SK-N-SH (cell line): ENCODE measurements at regions of chr2 and their contacts with region 1.

Region 1: DNA sequence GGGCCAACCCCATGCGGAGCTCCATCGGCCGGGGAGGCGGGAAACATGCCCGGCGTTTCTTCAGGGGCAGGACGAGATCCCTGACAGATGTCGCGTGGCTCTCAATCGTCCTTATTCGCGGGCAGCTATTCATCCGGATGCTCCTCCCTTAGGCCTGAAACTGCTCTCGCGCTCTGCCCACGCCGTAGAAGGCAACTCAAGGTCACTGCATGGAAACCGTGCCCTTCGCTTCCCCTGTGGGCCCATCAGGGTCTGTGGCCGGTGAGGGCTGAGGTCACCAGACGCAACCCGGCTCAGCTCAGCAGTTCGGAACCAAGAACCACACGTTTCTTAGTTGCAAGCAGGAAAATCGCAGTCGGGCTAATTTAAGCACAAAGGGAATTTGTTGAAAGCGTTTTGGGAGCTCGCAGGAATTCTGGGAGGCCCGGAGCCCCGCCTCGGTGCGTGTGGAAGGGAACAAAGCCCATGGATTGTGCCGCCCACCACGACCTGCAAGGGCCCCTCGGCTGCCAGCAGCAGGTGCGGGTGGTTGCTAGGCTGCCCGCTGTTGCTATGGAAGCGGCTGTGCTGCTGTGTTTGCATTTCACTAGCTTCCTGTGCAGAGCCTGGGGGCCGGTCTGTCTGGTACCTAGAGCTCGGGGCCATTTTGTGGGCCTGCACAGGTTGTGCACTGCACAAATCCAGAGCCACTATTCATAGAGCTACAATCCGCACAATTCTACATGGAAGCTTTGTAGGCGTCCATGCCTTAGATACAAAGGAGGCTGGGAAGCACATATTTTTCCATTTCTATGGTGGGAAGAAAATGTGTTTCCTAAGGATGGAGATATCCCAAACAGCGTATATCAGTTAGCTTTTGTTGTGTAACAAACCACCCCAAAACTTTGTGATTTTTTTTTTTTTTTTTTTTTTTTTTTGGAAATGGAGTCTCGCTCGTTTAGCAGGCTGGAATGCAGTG is 6.0 kb upstream of the ALLC start:
- DNase-seq: peak; percentile 74
- H3K4me3 ChIP-seq: no peak overlapping the region
- H3K27ac ChIP-seq: no peak overlapping the region
- H3K4me1 ChIP-seq: peaks cover 0 to 24% of the 10 kb centered on the region in 2 experiments; a peak in 2 of 4 replicates
- H3K27me3 ChIP-seq: no peaks in the 10 kb centered on the region
- CTCF ChIP-seq: no peak
- EP300 ChIP-seq: no peak
- RAD21 ChIP-seq: no peak

Region 2: GRCh38 chr2:3423492-3424175 is 228.3 kb before region 1 on chr2:
- CTCF ChIA-PET with region 1: interaction called, 28 read pairs
- POLR2A ChIA-PET with region 1: no interaction called
- DNase-seq: peak; percentile 88
- H3K4me3 ChIP-seq: no peak overlapping the region
- H3K27ac ChIP-seq: no peak overlapping the region
- H3K4me1 ChIP-seq: peaks cover 0 to 15% of the 10 kb centered on the region in 2 experiments; a peak in 1 of 4 replicates
- H3K27me3 ChIP-seq: no peaks in the 10 kb centered on the region
- CTCF ChIP-seq: peak; percentile 100
- EP300 ChIP-seq: no peak
- RAD21 ChIP-seq: peak; percentile 68

Region 3: DNA sequence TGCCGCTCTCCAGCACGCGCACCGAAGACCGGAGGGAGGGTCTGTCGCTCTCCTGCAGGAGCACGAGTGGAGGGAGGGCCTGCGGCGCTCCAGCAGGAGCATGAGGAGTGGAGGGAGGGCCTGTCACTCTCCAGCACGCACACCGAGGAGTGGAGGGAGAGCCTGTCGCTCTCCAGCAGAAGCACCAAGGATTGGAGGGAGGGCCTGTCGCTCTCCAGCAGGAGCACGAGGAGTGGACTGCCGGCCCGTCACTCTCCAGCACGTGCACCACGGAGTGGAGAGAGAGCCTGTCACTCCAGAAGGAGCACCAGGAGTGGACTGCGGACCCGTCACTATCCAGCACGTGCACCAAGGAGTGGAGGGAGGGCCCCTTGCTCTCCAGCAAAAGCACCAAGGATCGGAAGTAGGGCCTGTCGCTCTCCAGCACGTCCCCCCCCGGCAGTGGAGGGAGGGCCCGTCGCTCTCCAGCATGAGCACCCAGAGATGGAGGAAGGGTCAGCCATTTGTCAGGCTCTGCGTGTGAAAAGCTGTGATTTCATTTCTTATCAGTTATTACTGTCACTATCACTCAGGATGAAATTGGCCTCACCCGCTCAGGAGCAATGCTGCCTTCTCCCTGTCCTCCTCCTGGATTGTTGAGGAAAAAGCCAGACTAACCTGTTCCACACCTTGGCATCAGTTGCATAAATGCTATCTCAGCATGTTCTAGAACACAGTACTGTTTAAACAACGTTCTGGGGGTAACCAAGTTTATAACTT is 168.6 kb before region 1 on chr2:
- CTCF ChIA-PET with region 1: interaction called, 13 read pairs
- POLR2A ChIA-PET with region 1: no interaction called
- DNase-seq: no peak
- H3K4me3 ChIP-seq: no peak overlapping the region
- H3K27ac ChIP-seq: no peak overlapping the region
- H3K4me1 ChIP-seq: no peaks in the 10 kb centered on the region; a peak in 1 of 4 replicates
- H3K27me3 ChIP-seq: no peaks in the 10 kb centered on the region
- CTCF ChIP-seq: no peak
- EP300 ChIP-seq: no peak
- RAD21 ChIP-seq: no peak

Region 4: DNA sequence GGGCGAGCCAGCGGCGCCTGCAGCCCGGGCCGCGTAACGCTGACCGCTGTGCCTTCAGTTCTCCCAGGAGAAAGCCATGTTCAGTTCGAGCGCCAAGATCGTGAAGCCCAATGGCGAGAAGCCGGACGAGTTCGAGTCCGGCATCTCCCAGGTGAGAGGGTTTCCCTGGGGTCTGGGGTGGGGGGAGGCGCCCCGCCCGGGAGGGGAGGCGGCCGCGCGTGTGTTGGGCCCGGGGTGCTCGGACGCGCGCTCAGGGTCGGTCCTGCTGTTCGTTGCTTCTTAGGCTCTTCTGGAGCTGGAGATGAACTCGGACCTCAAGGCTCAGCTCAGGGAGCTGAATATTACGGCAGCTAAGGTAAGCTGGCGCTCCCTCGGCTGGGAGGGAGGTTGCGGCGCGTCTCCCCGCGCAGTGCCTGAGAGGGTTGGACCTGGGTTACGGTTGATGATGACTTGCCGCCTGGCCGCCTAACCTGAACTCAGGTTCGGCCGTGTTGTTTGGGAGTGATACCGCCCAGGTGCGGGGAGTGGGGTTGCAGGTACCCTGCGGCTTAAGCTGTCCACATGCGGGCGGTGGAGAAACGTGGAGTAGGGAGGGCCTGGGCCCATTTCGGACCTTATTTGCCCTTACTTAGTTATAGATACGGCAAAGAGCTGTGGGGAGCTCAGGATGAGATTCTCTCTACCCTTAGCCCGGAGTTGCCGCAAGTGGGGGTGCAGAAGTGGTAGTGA is 76.3 kb before region 1 on chr2:
- CTCF ChIA-PET with region 1: interaction called, 40 read pairs
- POLR2A ChIA-PET with region 1: interaction called, 8 read pairs
- DNase-seq: peak; percentile 55
- H3K4me3 ChIP-seq: peak overlapping the region; percentile 86 to 100
- H3K27ac ChIP-seq: peak overlapping the region; percentile 81 to 93
- H3K4me1 ChIP-seq: peaks cover 33 to 40% of the 10 kb centered on the region in 2 experiments; a peak in 3 of 4 replicates
- H3K27me3 ChIP-seq: no peaks in the 10 kb centered on the region
- CTCF ChIP-seq: no peak
- EP300 ChIP-seq: no peak
- RAD21 ChIP-seq: no peak

Region 5: GRCh38 chr2:3594493-3595281 is 57.3 kb before region 1 on chr2 and contains the start of gene COLEC11:
- CTCF ChIA-PET with region 1: interaction called, 43 read pairs
- POLR2A ChIA-PET with region 1: interaction called, 8 read pairs
- DNase-seq: peak; percentile 96
- H3K4me3 ChIP-seq: peak within 1 kb of the TSS; percentile 30 to 38; a peak in 3 of 4 replicates
- H3K27ac ChIP-seq: peak within 1 kb of the TSS; percentile 20 to 99; a peak in 3 of 4 replicates
- H3K4me1 ChIP-seq: peaks cover 0 to 39% of the 10 kb centered on the region in 2 experiments; a peak in 2 of 4 replicates
- H3K27me3 ChIP-seq: no peaks in the 10 kb centered on the region
- CTCF ChIP-seq: peak; percentile 38
- EP300 ChIP-seq: no peak; a peak in 2 of 4 replicates
- RAD21 ChIP-seq: peak; percentile 47
- polyA plus RNA-seq, gene COLEC11: 8.7 and 15.2 TPM in 2 replicates

Region 6: DNA sequence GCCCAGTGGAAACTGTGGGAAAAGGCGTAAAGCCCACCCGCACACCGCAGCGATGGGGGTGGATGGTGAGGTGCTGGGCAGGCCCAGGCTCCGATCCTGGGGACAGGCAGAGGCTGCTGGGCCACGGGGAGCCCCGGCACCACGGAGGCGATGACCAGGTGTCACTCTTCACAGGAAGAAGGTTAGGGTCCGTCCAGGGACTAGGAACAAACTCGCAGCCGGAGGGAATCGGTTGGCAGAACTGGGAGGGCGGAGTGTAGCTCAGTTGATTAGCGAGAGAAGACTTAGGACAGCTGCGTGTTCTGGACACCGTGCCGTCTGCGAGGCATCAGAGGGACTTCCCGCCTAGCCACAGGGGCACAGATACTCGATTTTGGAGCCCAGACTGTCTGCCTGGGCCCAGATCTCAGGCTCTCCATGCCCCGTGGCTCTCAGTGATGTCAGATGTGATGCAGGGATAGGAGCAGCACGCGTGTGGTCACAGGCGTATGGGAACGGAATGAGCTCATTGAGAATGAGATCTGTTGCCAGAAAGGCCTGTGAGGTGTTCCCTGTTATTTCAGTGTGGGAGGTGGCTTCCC is 10.0 kb before region 1 on chr2:
- CTCF ChIA-PET with region 1: interaction called, 18 read pairs
- POLR2A ChIA-PET with region 1: no interaction called
- DNase-seq: no peak
- H3K4me3 ChIP-seq: no peak overlapping the region
- H3K27ac ChIP-seq: no peak overlapping the region; a peak in 1 of 4 replicates
- H3K4me1 ChIP-seq: peaks cover 0 to 10% of the 10 kb centered on the region in 2 experiments; a peak in 1 of 4 replicates
- H3K27me3 ChIP-seq: no peaks in the 10 kb centered on the region
- CTCF ChIP-seq: no peak
- EP300 ChIP-seq: no peak
- RAD21 ChIP-seq: no peak

Region 7: DNA sequence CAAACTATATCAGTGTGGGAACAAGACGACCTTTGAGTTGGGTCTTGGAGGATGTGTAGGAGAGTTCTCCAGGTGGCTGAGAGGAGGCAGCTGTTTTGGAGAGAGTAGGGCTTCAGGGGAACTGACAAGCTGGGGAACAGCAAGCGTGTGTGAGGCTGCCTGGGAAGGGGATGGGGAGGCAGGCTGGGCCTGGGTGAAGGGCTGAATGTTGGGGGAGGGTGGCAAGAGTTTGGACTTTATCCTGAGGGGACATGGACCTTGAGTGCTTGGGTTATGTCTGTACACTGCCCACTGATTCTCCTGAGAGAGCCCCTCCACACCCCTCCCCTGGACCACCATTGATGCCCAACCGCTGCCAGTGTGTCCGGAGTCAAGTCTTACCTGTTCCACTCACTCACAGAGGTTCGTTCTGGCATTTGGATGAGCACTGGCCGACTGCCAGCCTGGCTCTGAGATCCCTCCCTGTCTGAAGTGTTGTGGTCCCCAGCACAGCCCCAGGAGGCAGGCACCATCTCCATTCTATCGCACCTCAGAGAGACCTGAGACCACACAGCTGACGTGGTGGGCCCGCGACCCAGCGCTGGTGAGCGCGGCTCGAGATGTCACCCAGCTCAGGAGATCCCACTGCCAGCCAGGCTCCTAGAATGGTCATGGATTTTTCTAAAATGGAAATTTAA is 110.9 kb after region 1 on chr2:
- CTCF ChIA-PET with region 1: no interaction called
- POLR2A ChIA-PET with region 1: no interaction called
- DNase-seq: no peak
- H3K4me3 ChIP-seq: no peak overlapping the region
- H3K27ac ChIP-seq: no peak overlapping the region
- H3K4me1 ChIP-seq: no peaks in the 10 kb centered on the region
- H3K27me3 ChIP-seq: no peaks in the 10 kb centered on the region
- CTCF ChIP-seq: no peak
- EP300 ChIP-seq: no peak
- RAD21 ChIP-seq: no peak